Caco-2 (cell line): ENCODE measurements at regions of chr12 and their contacts with region 1.

Region 1: GRCh38 chr12:88993651-88994050 is 358.6 kb downstream of the DUSP6 start:
- DNase-seq: peak in 1 of 2 experiments; percentile 40
- H3K4me3 ChIP-seq: no peak overlapping the region
- H3K4me3 Mint-ChIP-seq: no peak overlapping the region
- H3K27ac Mint-ChIP-seq: peak overlapping the region; percentile 75
- H3K4me1 ChIP-seq: peaks cover 32% of the 10 kb centered on the region
- H3K4me1 Mint-ChIP-seq: peaks cover 27% of the 10 kb centered on the region
- H3K27me3 ChIP-seq: no peaks in the 10 kb centered on the region
- H3K27me3 Mint-ChIP-seq: no peaks in the 10 kb centered on the region
- CTCF ChIP-seq: peak; percentile 61 to 63

Region 2: GRCh38 chr12:88153959-88154358 is 839.7 kb before region 1 on chr12:
- CTCF ChIA-PET with region 1: no interaction called
- POLR2A ChIA-PET with region 1: no interaction called
- intact Hi-C with region 1: loop called (anchors 1 kb)
- DNase-seq: peak in 1 of 2 experiments; percentile 27
- H3K4me3 ChIP-seq: no peak overlapping the region
- H3K4me3 Mint-ChIP-seq: no peak overlapping the region
- H3K27ac Mint-ChIP-seq: no peak overlapping the region
- H3K4me1 ChIP-seq: no peaks in the 10 kb centered on the region
- H3K4me1 Mint-ChIP-seq: no peaks in the 10 kb centered on the region
- H3K27me3 ChIP-seq: no peaks in the 10 kb centered on the region
- H3K27me3 Mint-ChIP-seq: no peaks in the 10 kb centered on the region
- CTCF ChIP-seq: peak in 1 of 2 experiments; percentile 47

Region 3: DNA sequence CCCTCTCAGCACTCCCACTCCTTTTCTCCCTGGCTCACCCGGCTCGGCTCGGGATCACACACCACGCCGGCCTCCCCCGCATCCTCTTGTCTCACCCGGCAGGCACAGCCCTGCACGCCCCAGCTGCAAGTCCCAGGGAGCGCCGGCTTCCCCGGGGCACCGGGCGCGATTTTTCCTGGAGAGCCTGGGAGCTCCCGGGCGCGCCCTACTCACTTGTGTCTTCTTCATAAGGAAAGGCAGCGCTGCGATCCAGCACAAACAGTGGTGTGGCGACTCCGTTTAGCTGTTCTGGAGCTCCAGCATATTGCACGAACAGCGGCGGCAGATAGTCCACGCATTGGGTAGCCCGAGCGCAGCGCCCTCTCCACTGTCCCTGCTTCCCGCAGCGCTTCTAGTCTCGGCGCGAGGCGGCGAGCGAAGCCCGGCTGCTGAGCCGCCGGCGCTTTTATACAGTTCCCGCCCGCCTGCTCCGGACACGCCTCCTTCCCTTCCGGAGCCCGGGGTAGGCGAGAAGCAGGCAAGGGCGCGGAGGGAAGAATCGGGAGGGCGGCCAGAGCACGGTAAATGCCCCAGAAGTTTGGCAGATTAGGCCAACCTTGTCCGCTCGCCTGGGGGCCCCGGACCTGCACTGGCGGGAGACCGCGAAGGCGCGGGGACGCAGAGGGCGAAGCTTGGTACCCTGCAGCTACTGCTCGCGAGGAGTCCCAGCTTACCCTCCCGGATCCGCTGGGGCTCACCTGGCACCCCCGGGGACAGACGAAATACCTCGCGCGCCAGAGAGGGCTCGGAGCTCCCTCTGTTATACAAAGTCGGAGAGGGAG is 413.4 kb before region 1 on chr12 and contains the start of gene KITLG:
- CTCF ChIA-PET with region 1: interaction called, 6 read pairs
- POLR2A ChIA-PET with region 1: interaction called, 3 read pairs
- intact Hi-C with region 1: loop called (anchors 1 kb)
- DNase-seq: peak; percentile 90 to 94
- H3K4me3 ChIP-seq: peak within 1 kb of the TSS; percentile 74
- H3K4me3 Mint-ChIP-seq: peak within 1 kb of the TSS; percentile 86
- H3K27ac Mint-ChIP-seq: peak within 1 kb of the TSS; percentile 87
- H3K4me1 ChIP-seq: peaks cover 14% of the 10 kb centered on the region
- H3K4me1 Mint-ChIP-seq: no peaks in the 10 kb centered on the region
- H3K27me3 ChIP-seq: no peaks in the 10 kb centered on the region
- H3K27me3 Mint-ChIP-seq: no peaks in the 10 kb centered on the region
- CTCF ChIP-seq: peak in 1 of 2 experiments; percentile 43
- total RNA-seq, gene KITLG: 200 and 211 TPM in 2 replicates

Region 4: DNA sequence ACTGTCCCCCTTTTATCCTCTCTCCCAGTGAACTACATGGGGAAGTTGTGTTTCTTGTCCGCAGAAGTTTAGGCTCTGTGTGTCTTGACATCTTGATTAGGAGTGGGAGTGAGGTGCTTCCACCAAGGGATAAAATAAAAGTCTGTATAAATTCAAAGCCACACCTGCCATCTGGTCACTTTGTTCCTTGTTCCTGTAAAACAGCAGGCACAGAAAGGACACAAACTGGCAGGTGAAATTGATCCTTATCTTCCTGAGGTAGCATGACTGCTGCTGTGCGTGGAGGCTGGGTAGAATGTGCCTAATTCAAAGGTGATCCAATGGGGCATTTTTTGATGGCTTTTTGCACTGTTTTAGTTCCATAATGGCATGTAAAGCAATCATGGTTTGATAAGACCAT is 309.0 kb before region 1 on chr12:
- CTCF ChIA-PET with region 1: no interaction called
- POLR2A ChIA-PET with region 1: no interaction called
- intact Hi-C with region 1: no loop called
- DNase-seq: no peak
- H3K4me3 ChIP-seq: no peak overlapping the region
- H3K4me3 Mint-ChIP-seq: no peak overlapping the region
- H3K27ac Mint-ChIP-seq: no peak overlapping the region
- H3K4me1 ChIP-seq: no peaks in the 10 kb centered on the region
- H3K4me1 Mint-ChIP-seq: no peaks in the 10 kb centered on the region
- H3K27me3 ChIP-seq: no peaks in the 10 kb centered on the region
- H3K27me3 Mint-ChIP-seq: no peaks in the 10 kb centered on the region
- CTCF ChIP-seq: no peak

Region 5: GRCh38 chr12:88816211-88816613 is 177.4 kb before region 1 on chr12:
- CTCF ChIA-PET with region 1: no interaction called
- POLR2A ChIA-PET with region 1: no interaction called
- intact Hi-C with region 1: loop called (anchors 10 kb)
- DNase-seq: no peak
- H3K4me3 ChIP-seq: no peak overlapping the region
- H3K4me3 Mint-ChIP-seq: no peak overlapping the region
- H3K27ac Mint-ChIP-seq: no peak overlapping the region
- H3K4me1 ChIP-seq: peaks cover 14% of the 10 kb centered on the region
- H3K4me1 Mint-ChIP-seq: peaks cover 12% of the 10 kb centered on the region
- H3K27me3 ChIP-seq: no peaks in the 10 kb centered on the region
- H3K27me3 Mint-ChIP-seq: no peaks in the 10 kb centered on the region
- CTCF ChIP-seq: no peak

Region 6: GRCh38 chr12:88931596-88931995 is 62.1 kb before region 1 on chr12:
- CTCF ChIA-PET with region 1: interaction called, 4 read pairs
- POLR2A ChIA-PET with region 1: no interaction called
- intact Hi-C with region 1: loop called (anchors 1 kb)
- DNase-seq: peak; percentile 76 to 89
- H3K4me3 ChIP-seq: no peak overlapping the region
- H3K4me3 Mint-ChIP-seq: peak overlapping the region; percentile 28
- H3K27ac Mint-ChIP-seq: peak overlapping the region; percentile 80
- H3K4me1 ChIP-seq: peaks cover 91% of the 10 kb centered on the region
- H3K4me1 Mint-ChIP-seq: peaks cover 56% of the 10 kb centered on the region
- H3K27me3 ChIP-seq: no peaks in the 10 kb centered on the region
- H3K27me3 Mint-ChIP-seq: no peaks in the 10 kb centered on the region
- CTCF ChIP-seq: no peak